ENCODE measurements at regions of chr19 and their contacts with region 1.

Region 1: DNA sequence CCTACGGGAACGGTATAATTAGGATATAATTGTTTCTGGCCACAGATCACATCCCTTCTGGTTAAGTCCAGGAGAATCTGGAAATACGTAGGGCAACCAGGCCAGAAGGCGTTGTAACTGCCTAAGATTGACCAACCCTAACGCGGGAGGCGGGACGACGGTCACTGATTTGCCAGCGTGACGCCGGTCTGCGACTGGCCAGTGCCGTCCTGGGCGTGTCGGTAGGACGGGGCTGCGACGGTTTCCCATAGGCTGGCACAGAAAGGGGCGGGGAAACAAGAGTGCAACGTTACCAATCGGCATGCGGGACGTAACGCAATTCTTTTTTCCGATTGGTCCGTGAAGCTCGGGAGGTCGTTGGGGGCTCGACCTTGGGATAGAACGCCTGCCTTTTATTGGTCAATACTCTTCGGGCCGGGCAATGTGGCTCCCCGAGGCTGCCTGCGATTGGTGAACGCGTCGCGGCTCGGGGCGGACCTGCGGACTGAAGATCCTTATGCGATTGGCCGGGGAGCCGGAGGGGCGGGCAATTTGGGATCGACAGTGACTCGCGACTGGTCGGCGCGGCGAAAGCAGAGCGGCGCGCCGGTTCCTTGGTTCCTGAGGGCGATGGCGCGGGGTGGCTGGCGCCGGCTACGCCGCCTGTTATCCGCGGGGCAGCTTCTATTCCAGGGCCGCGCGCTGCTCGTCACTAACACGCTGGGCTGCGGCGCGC is at the start of gene MPV17L2:
- DNase-seq: peak; percentile 100
- ATAC-seq: peak; percentile 96 to 97
- H3K4me3 ChIP-seq: peak within 1 kb of the TSS; percentile 75 to 89 (median 82)
- H3K27ac ChIP-seq: peak within 1 kb of the TSS; percentile 88 to 95 (median 94)
- H3K4me1 ChIP-seq: peaks cover 11 to 14% of the 10 kb centered on the region in 2 donors
- H3K27me3 ChIP-seq: no peaks in the 10 kb centered on the region
- CTCF ChIP-seq: no peak
- POLR2A ChIP-seq: peak; percentile 81 to 83
- total RNA-seq, gene MPV17L2: 18.1 to 38.9 (median 33.0) TPM

Region 2: DNA sequence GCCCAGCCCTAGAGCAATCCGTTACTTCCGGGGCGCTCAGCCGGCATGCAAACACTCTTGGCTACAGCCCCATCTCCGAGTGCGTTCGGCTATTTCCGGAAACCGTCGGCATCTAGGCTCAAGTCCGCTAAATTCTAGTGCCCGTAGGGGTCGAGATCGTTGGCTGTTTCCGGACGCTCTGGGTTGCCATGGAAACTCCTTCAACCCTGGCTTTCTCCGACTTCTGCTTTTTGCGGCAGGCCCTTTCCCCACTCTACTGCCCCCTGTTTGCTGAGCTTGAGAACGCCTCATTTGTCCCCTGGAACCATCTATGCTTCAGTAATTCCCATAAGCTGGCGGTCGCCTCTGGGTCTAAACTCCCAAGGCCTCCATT is 40.4 kb before region 1 on chr19:
- in situ Hi-C with region 1: no loop called
- intact Hi-C with region 1: loop called (anchors 1 kb)
- DNase-seq: peak; percentile 88 to 93
- ATAC-seq: peak; percentile 63 to 73
- H3K4me3 ChIP-seq: peak overlapping the region; percentile 68 to 86 (median 81)
- H3K27ac ChIP-seq: peak overlapping the region; percentile 97 to 100 (median 98)
- H3K4me1 ChIP-seq: peaks cover 34 to 42% of the 10 kb centered on the region in 2 donors
- H3K27me3 ChIP-seq: no peaks in the 10 kb centered on the region
- CTCF ChIP-seq: peak; percentile 42 to 70 (median 56)
- POLR2A ChIP-seq: no peak

Region 3: GRCh38 chr19:18160971-18161635 is 31.7 kb before region 1 on chr19:
- in situ Hi-C with region 1: no loop called
- intact Hi-C with region 1: loop called (anchors 2 kb)
- DNase-seq: peak in 1 of 2 donors; percentile 55
- ATAC-seq: peak; percentile 77 to 85
- H3K4me3 ChIP-seq: peak overlapping the region; percentile 40 to 53 (median 46)
- H3K27ac ChIP-seq: peak overlapping the region; percentile 76 to 88 (median 82)
- H3K4me1 ChIP-seq: peaks cover 17 to 37% of the 10 kb centered on the region in 2 donors
- H3K27me3 ChIP-seq: no peaks in the 10 kb centered on the region
- CTCF ChIP-seq: peak; percentile 61 to 97 (median 76)
- POLR2A ChIP-seq: no peak

Region 4: DNA sequence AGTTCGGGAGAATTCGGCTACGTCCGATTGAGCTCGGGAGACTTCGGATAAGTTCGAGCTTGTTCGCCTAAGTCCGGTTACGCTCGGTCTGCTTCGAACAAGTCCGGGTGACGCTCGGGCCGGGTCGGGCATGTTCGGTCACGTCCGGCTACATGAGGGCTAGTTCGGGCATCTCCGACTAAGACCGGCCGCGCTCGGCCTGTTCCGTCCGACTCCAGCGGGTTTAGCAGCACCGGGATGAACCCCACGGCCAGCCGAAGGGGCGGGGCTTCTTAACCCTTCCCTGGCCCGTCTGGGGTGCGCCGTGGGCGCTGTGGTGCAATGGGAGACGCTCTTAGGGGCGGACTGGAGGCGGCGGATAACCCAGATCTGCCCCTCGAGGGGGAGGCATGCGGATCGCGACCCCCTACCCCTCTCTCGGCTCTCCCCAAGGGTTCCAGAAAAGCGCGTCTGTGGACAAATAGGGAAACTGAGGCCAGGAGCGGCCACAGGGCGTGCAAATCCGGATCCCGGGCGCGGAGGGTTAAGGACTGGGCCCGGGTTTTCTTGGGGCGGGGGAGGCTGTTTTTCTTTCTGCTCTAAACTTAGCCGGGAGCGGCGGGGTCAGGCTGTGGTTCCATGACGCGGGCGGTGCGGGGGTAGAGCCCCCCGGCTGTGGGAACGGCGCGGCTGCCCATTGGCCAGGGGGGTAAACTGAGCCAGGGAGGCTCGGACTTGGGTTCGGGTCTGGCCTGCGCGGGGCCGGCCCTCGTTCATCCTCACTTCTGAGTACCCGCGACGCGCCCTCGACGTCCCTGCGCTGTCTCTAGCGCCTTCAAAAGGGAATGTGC is 31.9 kb after region 1 on chr19:
- in situ Hi-C with region 1: no loop called
- intact Hi-C with region 1: loop called (anchors 1 kb)
- DNase-seq: peak; percentile 97 to 98
- ATAC-seq: peak; percentile 93
- H3K4me3 ChIP-seq: peak overlapping the region; percentile 52 to 71 (median 62)
- H3K27ac ChIP-seq: peak overlapping the region; percentile 72 to 82 (median 76)
- H3K4me1 ChIP-seq: peaks cover 17 to 24% of the 10 kb centered on the region in 2 donors
- H3K27me3 ChIP-seq: peaks cover 0 to 6% (median 0%) of the 10 kb centered on the region in 3 donors
- CTCF ChIP-seq: no peak
- POLR2A ChIP-seq: no peak

Region 5: GRCh38 chr19:18322759-18323460 is 130.1 kb after region 1 on chr19 and contains the start of gene LSM4:
- in situ Hi-C with region 1: loop called in 1 of 4 experiments (anchors 10 kb)
- intact Hi-C with region 1: loop called (anchors 1 kb)
- DNase-seq: peak; percentile 98 to 99
- ATAC-seq: peak; percentile 94 to 97
- H3K4me3 ChIP-seq: peak within 1 kb of the TSS; percentile 81 to 88 (median 82)
- H3K27ac ChIP-seq: peak within 1 kb of the TSS; percentile 91 to 97 (median 95)
- H3K4me1 ChIP-seq: peaks cover 40 to 45% of the 10 kb centered on the region in 2 donors
- H3K27me3 ChIP-seq: no peaks in the 10 kb centered on the region
- CTCF ChIP-seq: peak in 3 of 5 experiments; percentile 20 to 31 (median 25)
- POLR2A ChIP-seq: peak; percentile 90 to 91
- total RNA-seq, gene LSM4: 122 to 294 (median 193) TPM

Measured in gastrocnemius medialis (tissue), 4 donors.